ENCODE measurements at regions of chr7 and their contacts with region 1.

Region 1: DNA sequence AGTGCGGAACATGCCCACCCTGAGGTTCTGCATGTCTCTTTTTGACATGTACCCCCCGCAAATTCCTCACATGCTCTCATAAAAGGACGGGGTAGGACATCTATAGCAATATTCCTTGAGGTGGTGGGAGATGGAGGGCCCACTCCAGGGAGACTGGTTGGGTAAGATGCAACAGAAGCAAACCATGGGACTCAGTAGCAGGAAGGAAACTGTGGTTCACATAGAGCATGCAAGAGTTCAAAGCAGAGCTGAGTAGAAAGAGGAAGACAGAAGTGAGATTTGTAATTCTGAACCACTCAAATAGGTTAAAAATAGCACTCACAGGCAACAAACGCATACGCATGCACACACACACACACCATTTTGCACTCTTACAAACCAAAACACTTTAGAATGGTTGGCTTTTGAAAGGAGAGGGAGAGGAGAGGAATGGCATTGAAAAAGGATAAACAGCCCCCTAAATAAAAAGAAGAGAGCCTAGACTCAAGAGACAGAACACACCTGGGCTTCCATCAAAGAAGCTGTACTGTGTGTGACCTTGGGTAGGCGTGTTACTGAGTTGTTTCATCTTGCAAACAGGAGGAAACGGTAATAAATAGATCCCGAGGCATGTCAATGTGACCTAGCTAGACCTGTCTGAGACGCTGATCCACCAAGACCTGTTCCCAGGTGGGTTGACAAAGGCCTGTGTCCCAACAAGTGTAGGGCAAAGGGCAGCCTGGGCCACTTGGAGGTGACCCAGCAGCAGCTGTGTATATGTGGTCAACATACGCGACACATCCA is 77.6 kb upstream of the LRRC4 start:
- DNase-seq: peak in 8 of 10 donors; percentile 6 to 81 (median 58)
- ATAC-seq: peak; percentile 79 to 84
- H3K4me3 Mint-ChIP-seq: peak overlapping the region; percentile 58 to 90 (median 84)
- H3K27ac Mint-ChIP-seq: peak overlapping the region; percentile 54 to 96 (median 91)
- H3K4me1 Mint-ChIP-seq: peaks cover 43 to 85% (median 81%) of the 10 kb centered on the region in 4 donors
- H3K27me3 Mint-ChIP-seq: no peaks in the 10 kb centered on the region

Region 2: GRCh38 chr7:128059143-128059988 is 49.5 kb before region 1 on chr7:
- POLR2A ChIA-PET with region 1: interaction called, 18 read pairs
- DNase-seq: peak in 6 of 10 donors; percentile 7 to 73 (median 61)
- ATAC-seq: peak; percentile 92 to 96
- H3K4me3 Mint-ChIP-seq: peak overlapping the region; percentile 13 to 88 (median 73)
- H3K27ac Mint-ChIP-seq: peak overlapping the region; percentile 52 to 82 (median 74)
- H3K4me1 Mint-ChIP-seq: peaks cover 38 to 82% (median 70%) of the 10 kb centered on the region in 4 donors
- H3K27me3 Mint-ChIP-seq: no peaks in the 10 kb centered on the region

Region 3: GRCh38 chr7:128201051-128201689 is 92.3 kb after region 1 on chr7:
- POLR2A ChIA-PET with region 1: no interaction called
- DNase-seq: peak in 2 of 10 donors; percentile 6 to 12
- ATAC-seq: peak; percentile 30 to 48
- H3K4me3 Mint-ChIP-seq: peak overlapping the region; percentile 76 to 93 (median 86)
- H3K27ac Mint-ChIP-seq: peak overlapping the region in 1 of 10 donors; percentile 25
- H3K4me1 Mint-ChIP-seq: peaks cover 15 to 24% (median 23%) of the 10 kb centered on the region in 4 donors
- H3K27me3 Mint-ChIP-seq: peaks cover 33 to 63% (median 47%) of the 10 kb centered on the region in 5 donors

Measured in naive thymus-derived CD8-positive, alpha-beta T cell (primary cell).